ENCODE measurements at regions of chr11 and their contacts with region 1.

Region 1: DNA sequence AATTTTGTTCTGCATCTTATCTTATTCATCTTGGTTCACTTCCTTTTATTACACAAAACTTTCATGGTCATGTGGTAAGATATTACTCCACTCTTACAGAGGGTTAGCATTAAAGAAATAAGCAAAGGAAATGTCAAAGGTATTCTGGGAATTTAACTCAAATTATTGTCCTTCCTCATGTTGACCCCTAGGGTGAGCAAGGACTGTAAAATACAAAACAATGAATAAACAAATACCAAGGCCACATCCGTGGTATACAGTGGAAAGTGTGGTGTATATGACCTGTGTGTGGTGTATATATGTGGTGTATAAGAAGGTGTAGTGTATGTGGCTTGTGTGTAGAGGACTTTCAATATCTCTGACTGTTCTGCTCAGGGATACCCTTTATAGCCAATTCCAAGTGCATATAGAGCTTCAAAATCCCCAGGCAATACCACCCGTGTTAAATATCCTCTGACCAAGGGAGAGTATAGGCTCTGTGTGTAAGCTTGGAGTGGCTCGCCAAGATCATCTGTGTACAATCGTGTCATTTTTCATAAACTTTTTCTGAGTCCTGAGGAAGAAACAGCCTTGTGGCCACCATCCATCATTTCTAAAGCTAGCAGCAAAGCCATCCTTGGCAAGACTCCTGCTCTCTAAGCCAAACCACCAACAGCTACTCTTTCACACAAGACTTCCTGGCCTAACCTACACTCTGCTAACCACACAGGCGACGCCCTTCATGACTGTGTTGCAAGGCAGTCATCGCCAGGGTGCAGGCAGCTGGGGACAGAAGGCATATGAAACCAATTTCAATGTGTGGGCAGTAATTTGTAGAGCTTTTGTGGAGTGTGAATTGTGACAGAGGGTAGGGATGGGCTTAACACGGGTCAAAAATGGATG is 548.0 kb downstream of the ETS1 start:
- DNase-seq: peak; percentile 77
- H3K4me3 Mint-ChIP-seq: peak overlapping the region; percentile 68
- H3K27ac Mint-ChIP-seq: peak overlapping the region; percentile 92
- H3K4me1 Mint-ChIP-seq: peaks cover 34% of the 10 kb centered on the region
- H3K27me3 Mint-ChIP-seq: no peaks in the 10 kb centered on the region

Region 2: GRCh38 chr11:128052912-128053641 is 13.7 kb after region 1 on chr11:
- intact Hi-C with region 1: loop called (anchors 1 kb)
- DNase-seq: no peak
- H3K4me3 Mint-ChIP-seq: peak overlapping the region; percentile 38
- H3K27ac Mint-ChIP-seq: peak overlapping the region; percentile 77
- H3K4me1 Mint-ChIP-seq: peaks cover 66% of the 10 kb centered on the region
- H3K27me3 Mint-ChIP-seq: no peaks in the 10 kb centered on the region

Region 3: GRCh38 chr11:128195057-128195751 is 155.8 kb after region 1 on chr11:
- intact Hi-C with region 1: loop called (anchors 1 kb)
- DNase-seq: peak; percentile 42
- H3K4me3 Mint-ChIP-seq: no peak overlapping the region
- H3K27ac Mint-ChIP-seq: peak overlapping the region; percentile 60
- H3K4me1 Mint-ChIP-seq: peaks cover 47% of the 10 kb centered on the region
- H3K27me3 Mint-ChIP-seq: peaks cover 2% of the 10 kb centered on the region

Region 4: DNA sequence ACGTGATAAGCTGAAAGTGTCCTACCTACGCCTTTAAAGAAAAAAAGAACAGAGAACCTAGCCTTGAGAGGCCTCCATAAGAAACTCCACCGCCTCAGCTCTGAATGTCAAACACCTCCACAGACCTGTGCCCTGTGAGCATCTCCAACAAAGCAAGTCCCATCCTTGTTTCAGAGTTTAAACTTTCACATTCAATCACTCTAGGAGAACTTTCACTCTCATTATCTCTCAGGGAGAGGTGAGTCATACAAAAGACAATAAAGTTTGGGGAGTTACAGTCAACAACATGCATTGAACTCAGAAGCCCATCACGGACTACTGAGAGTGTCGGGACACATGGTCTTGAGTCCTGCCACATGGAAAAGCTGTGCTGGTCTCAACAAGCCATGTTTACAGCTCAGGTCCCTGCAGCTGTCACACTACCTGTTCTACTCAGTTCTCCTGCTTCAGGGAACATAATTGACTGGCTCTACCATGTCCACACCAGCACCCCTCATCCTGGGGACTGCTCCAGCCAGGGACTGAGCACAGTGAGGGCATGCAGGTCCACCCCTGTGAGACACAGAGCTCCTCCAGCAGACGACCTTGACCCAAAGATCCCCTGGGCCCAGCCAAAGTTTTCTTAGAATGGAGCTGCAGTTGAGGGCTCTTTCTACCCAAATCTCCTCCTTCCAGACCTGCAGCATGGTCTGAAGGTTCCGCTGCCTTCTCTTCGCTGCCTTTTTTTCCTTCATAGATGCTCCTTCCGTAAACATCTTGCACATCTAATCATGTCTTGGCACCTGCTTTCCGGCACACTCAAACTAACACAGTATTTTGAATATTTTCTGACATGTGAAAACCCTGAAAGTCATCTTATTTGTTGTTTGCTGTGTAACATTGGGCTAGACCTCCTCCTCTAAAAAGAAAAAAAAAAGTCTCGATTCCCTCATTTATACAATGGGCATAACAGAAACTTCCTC is 433.0 kb after region 1 on chr11:
- intact Hi-C with region 1: loop called (anchors 1 kb)
- DNase-seq: peak; percentile 61
- H3K4me3 Mint-ChIP-seq: peak overlapping the region; percentile 80
- H3K27ac Mint-ChIP-seq: peak overlapping the region; percentile 95
- H3K4me1 Mint-ChIP-seq: peaks cover 94% of the 10 kb centered on the region
- H3K27me3 Mint-ChIP-seq: no peaks in the 10 kb centered on the region

Region 5: DNA sequence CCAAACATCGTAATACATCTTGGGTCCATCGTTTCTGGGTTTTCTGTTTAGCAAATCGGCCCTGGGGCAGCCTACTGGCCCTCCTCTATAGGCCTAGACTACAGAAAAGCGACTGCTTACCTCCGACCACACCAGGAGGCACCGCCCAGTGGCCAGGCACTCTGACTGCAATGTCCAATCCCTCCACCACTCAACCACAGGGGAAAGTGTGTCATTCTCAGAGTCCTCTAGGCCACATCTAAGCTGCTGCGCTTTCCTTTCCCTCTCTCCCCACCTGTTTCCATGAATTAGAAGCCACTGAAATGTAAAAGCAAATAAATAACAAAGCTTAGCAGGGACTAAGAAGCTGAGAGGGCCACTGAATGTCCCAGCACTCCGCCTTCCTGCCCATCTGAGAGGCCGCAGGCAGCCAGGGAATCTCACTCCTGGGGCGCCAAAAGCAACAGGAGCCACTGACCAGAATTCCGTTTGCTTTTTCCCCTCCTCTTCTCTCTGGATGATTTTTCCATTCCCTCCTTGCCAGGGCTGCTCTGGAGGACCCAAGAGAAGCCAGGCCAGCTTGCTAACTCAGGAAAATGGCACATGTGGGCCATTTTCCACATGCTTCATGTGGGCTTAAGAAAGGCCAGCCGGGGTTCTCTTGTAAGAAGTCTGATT is 604.4 kb after region 1 on chr11:
- intact Hi-C with region 1: loop called (anchors 5 kb)
- DNase-seq: no peak
- H3K4me3 Mint-ChIP-seq: no peak overlapping the region
- H3K27ac Mint-ChIP-seq: no peak overlapping the region
- H3K4me1 Mint-ChIP-seq: no peaks in the 10 kb centered on the region
- H3K27me3 Mint-ChIP-seq: peaks cover 14% of the 10 kb centered on the region

Region 6: GRCh38 chr11:128831174-128832120 is 792.1 kb after region 1 on chr11:
- intact Hi-C with region 1: loop called (anchors 2 kb)
- DNase-seq: peak; percentile 75
- H3K4me3 Mint-ChIP-seq: peak overlapping the region; percentile 68
- H3K27ac Mint-ChIP-seq: peak overlapping the region; percentile 90
- H3K4me1 Mint-ChIP-seq: peaks cover 31% of the 10 kb centered on the region
- H3K27me3 Mint-ChIP-seq: peaks cover 9% of the 10 kb centered on the region

Region 7: GRCh38 chr11:129279326-129280026 is 1240.1 kb after region 1 on chr11:
- intact Hi-C with region 1: loop called (anchors 10 kb)
- DNase-seq: peak; percentile 74
- H3K4me3 Mint-ChIP-seq: peak overlapping the region; percentile 79
- H3K27ac Mint-ChIP-seq: peak overlapping the region; percentile 81
- H3K4me1 Mint-ChIP-seq: peaks cover 40% of the 10 kb centered on the region
- H3K27me3 Mint-ChIP-seq: peaks cover 29% of the 10 kb centered on the region

Measured in activated T-helper 1 cell treated with anti-CD3 and anti-CD28 coated beads, Interleukin-12 subunit alpha, Interleukin-12 subunit beta, Interleukin-2, Interleukin-4 antibody, amounts not matched to agents 30 ng/mL and 10 ng/mL and 1 ng/mL, durations not matched to agents 14 hours and 24 hours and 36 hours (primary cell).